ENCODE measurements at regions of chr12 and their contacts with region 1.

Region 1: GRCh38 chr12:57309420-57309819 is 58.4 kb upstream of the STAC3 start:
- DNase-seq: no peak
- ATAC-seq: peak; percentile 32
- H3K4me3 ChIP-seq: no peak overlapping the region
- H3K27ac ChIP-seq: no peak overlapping the region
- H3K4me1 ChIP-seq: no peaks in the 10 kb centered on the region
- H3K27me3 ChIP-seq: no peaks in the 10 kb centered on the region
- CTCF ChIP-seq: no peak

Region 2: DNA sequence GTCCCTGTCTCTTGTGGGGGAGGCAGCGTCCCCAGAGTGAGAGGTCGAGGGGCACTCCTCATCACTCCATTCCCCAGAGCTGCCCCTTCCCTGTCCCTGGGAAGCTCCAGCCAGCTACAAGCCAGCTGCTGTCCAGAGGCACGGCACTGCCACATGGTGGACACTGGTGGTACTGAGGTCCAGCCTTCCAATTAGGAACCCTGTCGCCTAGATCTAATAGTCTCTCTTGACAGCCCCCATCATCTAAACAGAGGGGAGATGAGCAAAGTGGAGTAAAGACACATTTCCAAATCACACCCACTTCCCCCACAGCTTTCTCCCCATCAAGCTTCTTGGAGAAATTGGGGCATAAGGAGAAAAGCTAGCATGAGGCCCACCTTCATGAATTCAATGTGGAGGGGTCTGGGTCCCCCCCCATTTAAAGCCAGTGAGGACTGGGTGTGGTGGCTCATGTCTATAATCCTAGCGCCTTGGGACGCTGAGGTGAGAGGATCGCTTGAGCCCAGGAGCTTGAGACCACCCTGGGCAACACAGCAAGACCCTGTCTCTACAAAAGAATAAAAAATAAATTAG is 143.6 kb after region 1 on chr12:
- intact Hi-C with region 1: loop called in 1 of 2 experiments (anchors 5 kb)
- DNase-seq: peak; percentile 53 to 90 (median 78)
- ATAC-seq: peak; percentile 93
- H3K4me3 ChIP-seq: no peak overlapping the region
- H3K27ac ChIP-seq: no peak overlapping the region
- H3K4me1 ChIP-seq: no peaks in the 10 kb centered on the region
- H3K27me3 ChIP-seq: peaks cover 0 to 19% of the 10 kb centered on the region in 2 donors
- CTCF ChIP-seq: peak; percentile 83 to 89

Region 3: DNA sequence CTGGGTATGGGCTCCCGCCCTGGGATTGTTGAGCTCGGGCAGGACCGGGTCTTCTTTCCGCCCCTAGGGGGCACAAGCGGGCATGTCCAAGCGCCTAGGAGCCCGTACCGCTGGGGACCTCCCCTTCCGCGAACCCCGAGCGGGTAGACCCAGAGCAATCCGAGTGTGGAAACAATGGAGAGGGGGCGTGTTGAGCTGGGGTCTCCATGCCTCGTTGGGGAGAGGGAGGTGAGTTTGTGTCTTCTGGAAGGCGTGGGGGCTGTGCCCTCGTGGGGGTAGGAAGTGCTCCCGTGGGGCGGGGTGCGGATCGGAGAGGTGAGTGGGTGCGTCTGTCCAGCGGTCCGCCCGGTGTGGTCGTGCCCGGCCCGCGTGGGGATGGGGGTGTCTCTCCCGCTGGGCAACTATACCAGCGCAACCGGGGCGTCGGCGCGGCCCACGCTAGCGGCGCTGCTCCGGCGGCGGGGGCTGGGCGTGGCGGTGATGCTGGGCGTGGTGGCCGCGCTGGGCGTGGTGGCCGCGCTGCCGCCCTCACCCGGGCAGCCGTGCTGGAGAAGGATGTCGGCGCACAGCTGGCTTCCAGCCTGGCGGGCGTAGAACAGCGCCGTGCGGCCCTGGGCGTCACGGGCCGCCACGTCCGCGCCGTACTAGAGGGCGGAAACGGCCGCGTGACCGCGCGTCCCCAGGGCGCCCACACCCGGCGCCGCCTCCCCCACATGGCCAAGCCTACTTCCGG is 416.9 kb after region 1 on chr12:
- intact Hi-C with region 1: no loop called
- DNase-seq: peak; percentile 65 to 89 (median 79)
- ATAC-seq: peak; percentile 86
- H3K4me3 ChIP-seq: peak overlapping the region; percentile 51 to 55
- H3K27ac ChIP-seq: peak overlapping the region; percentile 15 to 67
- H3K4me1 ChIP-seq: peaks cover 4 to 6% of the 10 kb centered on the region in 2 donors
- H3K27me3 ChIP-seq: peaks cover 0 to 7% of the 10 kb centered on the region in 2 donors
- CTCF ChIP-seq: peak; percentile 67 to 75